Heart left ventricle (tissue), 16 donors: ENCODE measurements at regions of chr6 and their contacts with region 1.

Region 1: DNA sequence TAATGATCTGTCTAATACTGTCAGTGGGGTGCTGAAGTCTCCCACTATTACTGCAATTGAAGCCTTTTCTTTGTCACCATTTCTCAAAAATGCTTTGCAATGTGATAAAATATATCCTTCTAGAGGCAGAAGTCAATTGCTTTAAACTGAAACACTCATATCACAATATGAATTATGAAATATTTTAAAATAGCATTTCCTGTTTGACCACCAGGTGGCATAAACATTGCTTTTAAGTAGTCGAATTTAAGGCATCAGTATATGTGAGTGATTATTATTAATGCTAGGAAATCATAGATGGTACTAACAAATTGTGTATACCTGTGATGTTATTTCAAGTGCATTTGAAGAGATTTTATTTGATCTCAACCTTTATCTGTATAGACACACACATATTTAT is 87.5 kb downstream of the MEI4 start:
- DNase-seq: no peak
- ATAC-seq: no peak
- H3K4me3 ChIP-seq: no peak overlapping the region
- H3K27ac ChIP-seq: no peak overlapping the region
- H3K4me1 ChIP-seq: no peaks in the 10 kb centered on the region
- H3K27me3 ChIP-seq: no peaks in the 10 kb centered on the region
- CTCF ChIP-seq: peak in 11 of 12 donors; percentile 9 to 53 (median 41)
- POLR2A ChIP-seq: no peak

Region 2: GRCh38 chr6:78835817-78836216 is 1095.4 kb after region 1 on chr6:
- intact Hi-C with region 1: loop called in 1 of 10 experiments (anchors 10 kb)
- DNase-seq: no peak
- ATAC-seq: no peak
- H3K4me3 ChIP-seq: no peak overlapping the region
- H3K27ac ChIP-seq: no peak overlapping the region
- H3K4me1 ChIP-seq: peaks cover 0 to 11% (median 0%) of the 10 kb centered on the region in 12 donors
- H3K27me3 ChIP-seq: no peaks in the 10 kb centered on the region
- CTCF ChIP-seq: peak in 2 of 12 donors; percentile 19 to 25
- POLR2A ChIP-seq: no peak